ENCODE measurements at regions of chr10 and their contacts with region 1.

Region 1: DNA sequence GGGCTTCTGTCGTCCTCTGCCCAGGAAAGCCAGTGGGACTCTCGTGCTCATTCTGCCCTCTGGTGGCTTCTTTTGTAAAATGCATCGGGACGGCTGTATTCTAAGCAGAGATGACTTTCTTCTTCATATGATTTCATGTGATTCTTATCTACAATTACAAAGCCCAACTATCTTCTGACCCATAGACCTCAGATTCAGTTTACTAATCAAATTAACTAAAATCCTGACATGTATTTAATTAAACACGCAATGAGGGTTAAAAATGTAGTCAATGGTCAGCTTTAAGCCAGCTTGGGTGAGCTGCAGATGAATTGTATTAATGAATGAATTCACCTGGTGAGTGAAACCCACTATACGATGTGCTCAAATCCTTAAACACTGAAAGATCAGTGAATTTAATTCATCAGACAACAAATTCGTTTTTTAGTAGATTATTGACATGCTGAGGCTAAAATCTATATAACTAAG is 117.6 kb upstream of the FAM204A start:
- DNase-seq: peak; percentile 69
- ATAC-seq: peak; percentile 98
- H3K4me3 Mint-ChIP-seq: no peak overlapping the region
- H3K27ac Mint-ChIP-seq: no peak overlapping the region
- H3K4me1 Mint-ChIP-seq: 0 out of 2 replicates have a peak, but pooled peaks cover 2% of the 10 kb centered on the region
- H3K27me3 Mint-ChIP-seq: peaks cover 6% of the 10 kb centered on the region; the same call in 1 of the 2 replicates
- CTCF ChIP-seq: peak; percentile 50

Region 2: GRCh38 chr10:117537436-117537903 is 922.3 kb before region 1 on chr10:
- CTCF ChIA-PET with region 1: interaction called, 13 read pairs
- POLR2A ChIA-PET with region 1: no interaction called
- DNase-seq: peak; percentile 43
- ATAC-seq: peak; percentile 10
- H3K4me3 Mint-ChIP-seq: peak overlapping the region; percentile 50
- H3K27ac Mint-ChIP-seq: no peak overlapping the region
- H3K4me1 Mint-ChIP-seq: peaks cover 26% of the 10 kb centered on the region
- H3K27me3 Mint-ChIP-seq: peaks cover 100% of the 10 kb centered on the region
- CTCF ChIP-seq: peak; percentile 60

Region 3: DNA sequence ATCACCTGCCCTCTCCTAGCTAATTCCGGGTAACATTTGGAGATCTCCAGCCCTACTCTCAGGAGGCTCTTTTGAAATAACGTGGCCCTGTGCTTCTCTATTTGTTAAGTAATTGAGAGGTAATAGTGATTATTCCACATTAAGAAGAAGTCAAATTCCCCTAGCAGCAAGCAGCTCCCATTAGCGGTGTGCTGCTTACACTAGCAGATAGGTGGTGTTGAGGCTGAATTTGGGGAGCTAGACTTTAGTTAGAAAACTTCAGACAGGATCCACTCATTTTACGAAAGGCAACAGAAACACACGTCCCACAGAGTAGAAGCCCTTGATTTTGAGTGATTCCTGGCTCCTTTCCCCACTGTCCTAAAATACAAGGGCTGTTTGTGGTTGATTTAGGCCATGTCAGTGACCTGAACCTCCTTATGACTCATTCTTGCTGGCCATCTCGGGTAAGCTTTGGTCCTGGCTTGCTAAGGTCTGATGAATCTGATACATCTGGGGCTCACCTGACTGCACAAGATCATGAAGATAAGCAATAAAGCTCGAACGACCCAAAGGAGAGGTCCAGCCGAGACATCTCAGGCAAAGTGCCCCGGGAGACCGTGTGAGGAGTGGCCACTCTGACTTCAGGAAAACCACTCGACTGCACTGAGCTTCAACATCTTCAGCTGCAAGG is 194.8 kb before region 1 on chr10:
- CTCF ChIA-PET with region 1: interaction called, 17 read pairs
- POLR2A ChIA-PET with region 1: no interaction called
- DNase-seq: no peak
- ATAC-seq: no peak
- H3K4me3 Mint-ChIP-seq: no peak overlapping the region
- H3K27ac Mint-ChIP-seq: no peak overlapping the region
- H3K4me1 Mint-ChIP-seq: peaks cover 20% of the 10 kb centered on the region
- H3K27me3 Mint-ChIP-seq: peaks cover 100% of the 10 kb centered on the region
- CTCF ChIP-seq: no peak

Region 4: GRCh38 chr10:118401708-118402193 is 58.0 kb before region 1 on chr10:
- CTCF ChIA-PET with region 1: no interaction called
- POLR2A ChIA-PET with region 1: no interaction called
- DNase-seq: no peak
- ATAC-seq: no peak
- H3K4me3 Mint-ChIP-seq: no peak overlapping the region
- H3K27ac Mint-ChIP-seq: no peak overlapping the region
- H3K4me1 Mint-ChIP-seq: no peaks in the 10 kb centered on the region; the same call in 1 of the 2 replicates
- H3K27me3 Mint-ChIP-seq: no peaks in the 10 kb centered on the region
- CTCF ChIP-seq: no peak

Region 5: DNA sequence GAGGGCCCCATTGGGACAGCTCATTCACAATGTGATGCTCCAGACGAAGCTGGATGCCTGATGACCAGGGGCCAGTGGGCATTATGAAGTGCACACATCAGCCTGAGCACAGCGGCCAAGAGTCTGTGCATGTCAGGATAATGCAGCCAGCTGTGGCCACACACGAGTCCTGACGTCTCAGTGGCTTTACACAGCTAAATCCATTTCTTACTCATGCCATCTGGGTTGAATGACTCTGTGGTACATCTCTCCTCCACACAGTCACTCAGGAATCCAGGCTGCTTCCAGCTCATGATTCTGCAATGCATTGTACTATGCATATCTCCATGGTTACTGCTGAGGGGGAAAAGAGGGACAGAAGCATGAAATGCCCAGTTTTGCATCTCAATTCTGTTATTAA is 12.1 kb after region 1 on chr10:
- CTCF ChIA-PET with region 1: interaction called, 12 read pairs
- POLR2A ChIA-PET with region 1: no interaction called
- DNase-seq: no peak
- ATAC-seq: no peak
- H3K4me3 Mint-ChIP-seq: no peak overlapping the region
- H3K27ac Mint-ChIP-seq: no peak overlapping the region
- H3K4me1 Mint-ChIP-seq: 0 out of 2 replicates have a peak, but pooled peaks cover 4% of the 10 kb centered on the region
- H3K27me3 Mint-ChIP-seq: no peaks in the 10 kb centered on the region; the same call in 1 of the 2 replicates
- CTCF ChIP-seq: no peak

Region 6: GRCh38 chr10:118568327-118568848 is 108.6 kb after region 1 on chr10:
- CTCF ChIA-PET with region 1: interaction called, 16 read pairs
- POLR2A ChIA-PET with region 1: no interaction called
- DNase-seq: peak; percentile 17
- ATAC-seq: peak; percentile 34; the same call in 1 of the 2 replicates
- H3K4me3 Mint-ChIP-seq: no peak overlapping the region
- H3K27ac Mint-ChIP-seq: no peak overlapping the region
- H3K4me1 Mint-ChIP-seq: peaks cover 4% of the 10 kb centered on the region
- H3K27me3 Mint-ChIP-seq: peaks cover 3% of the 10 kb centered on the region; the same call in 1 of the 2 replicates
- CTCF ChIP-seq: peak; percentile 79

Region 7: DNA sequence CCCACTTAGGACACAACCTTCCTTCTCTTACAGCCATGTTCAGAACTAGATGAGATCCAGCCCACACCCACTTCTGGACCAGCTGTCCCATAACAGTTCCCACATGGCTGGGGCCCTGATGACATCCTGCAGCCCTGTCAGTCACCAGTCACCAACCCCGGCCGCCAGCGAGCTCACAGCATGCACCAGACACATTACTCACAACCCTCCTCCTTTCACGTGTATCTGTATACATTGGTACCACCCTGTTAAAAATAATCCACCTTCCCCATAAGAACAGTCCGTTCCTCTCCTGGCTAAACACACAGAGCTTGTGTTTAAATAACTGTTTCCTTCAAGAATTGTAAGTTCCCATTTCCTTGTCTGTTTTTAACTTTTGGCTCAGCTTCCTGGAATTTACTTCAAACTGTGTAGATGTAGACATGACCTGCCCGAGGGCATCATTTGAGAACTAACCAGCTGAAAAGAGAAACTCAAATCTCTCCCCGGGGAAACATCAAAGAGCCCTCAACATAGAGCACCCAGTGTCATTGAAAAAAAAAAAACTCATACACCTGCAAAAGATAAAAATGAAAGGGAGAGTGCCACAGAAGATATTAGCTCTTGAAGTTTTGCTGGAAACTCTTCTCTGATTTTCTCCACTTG is 161.7 kb after region 1 on chr10:
- CTCF ChIA-PET with region 1: no interaction called
- POLR2A ChIA-PET with region 1: no interaction called
- DNase-seq: no peak
- ATAC-seq: no peak
- H3K4me3 Mint-ChIP-seq: no peak overlapping the region
- H3K27ac Mint-ChIP-seq: no peak overlapping the region
- H3K4me1 Mint-ChIP-seq: peaks cover 20% of the 10 kb centered on the region
- H3K27me3 Mint-ChIP-seq: peaks cover 5% of the 10 kb centered on the region
- CTCF ChIP-seq: no peak

Measured in WTC11 (cell line).